ENCODE measurements at regions of chr14 and their contacts with region 1.

Region 1: DNA sequence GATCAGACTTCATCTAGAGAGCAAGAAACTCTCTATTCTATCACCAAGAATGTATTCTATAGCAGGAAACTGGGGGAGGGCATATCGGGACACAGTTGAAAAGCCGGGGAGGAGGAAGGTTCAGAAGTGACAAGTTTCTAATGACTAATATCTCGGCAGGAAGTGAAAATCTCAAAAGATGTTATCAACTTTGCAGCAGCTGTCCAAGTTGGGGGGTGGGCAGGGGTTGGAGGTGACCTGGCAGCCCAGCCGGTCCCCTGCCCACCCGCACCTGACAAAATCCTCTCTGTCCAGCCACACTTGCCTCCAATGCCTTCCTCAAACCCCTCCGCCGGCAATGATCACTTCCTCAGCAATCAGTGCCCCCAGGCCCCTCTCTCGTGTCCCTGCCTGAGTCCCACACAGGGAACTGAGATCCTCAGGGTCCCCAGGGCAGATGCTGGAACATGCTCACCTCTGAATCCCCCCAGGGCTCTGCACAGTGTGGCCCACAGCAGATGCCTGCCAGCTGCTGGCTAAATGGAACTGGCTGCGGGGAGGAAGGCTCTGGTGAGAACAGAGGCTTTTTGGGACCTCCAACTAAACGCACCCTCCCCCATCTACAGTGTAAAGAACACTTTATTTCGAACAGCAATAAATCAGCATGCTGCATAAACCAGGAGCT is 43.9 kb downstream of the CCDC88C start:
- DNase-seq: peak in 6 of 9 donors; percentile 42 to 61 (median 56)
- ATAC-seq: peak; percentile 59
- H3K4me3 ChIP-seq: peak overlapping the region; percentile 61
- H3K4me3 Mint-ChIP-seq: peak overlapping the region; percentile 79 to 89 (median 86)
- H3K27ac ChIP-seq: peak overlapping the region; percentile 72
- H3K27ac Mint-ChIP-seq: peak overlapping the region; percentile 89 to 99 (median 97)
- H3K4me1 ChIP-seq: peaks cover 94 to 98% of the 10 kb centered on the region in 2 donors
- H3K4me1 Mint-ChIP-seq: peaks cover 84 to 100% (median 98%) of the 10 kb centered on the region in 7 donors
- H3K27me3 ChIP-seq: no peaks in the 10 kb centered on the region
- H3K27me3 Mint-ChIP-seq: no peaks in the 10 kb centered on the region

Region 2: GRCh38 chr14:91388551-91388975 is 14.8 kb after region 1 on chr14:
- CTCF ChIA-PET with region 1: interaction called, 5 read pairs
- POLR2A ChIA-PET with region 1: interaction called, 22 read pairs
- intact Hi-C with region 1: loop called in 1 of 2 experiments (anchors 1 kb)
- DNase-seq: peak in 5 of 9 donors; percentile 29 to 64 (median 47)
- ATAC-seq: peak; percentile 74
- H3K4me3 ChIP-seq: peak overlapping the region; percentile 24
- H3K4me3 Mint-ChIP-seq: peak overlapping the region; percentile 56 to 92 (median 74)
- H3K27ac ChIP-seq: peak overlapping the region; percentile 60
- H3K27ac Mint-ChIP-seq: peak overlapping the region; percentile 12 to 93 (median 84)
- H3K4me1 ChIP-seq: peaks cover 90% of the 10 kb centered on the region in 2 donors
- H3K4me1 Mint-ChIP-seq: peaks cover 63 to 98% (median 88%) of the 10 kb centered on the region in 7 donors
- H3K27me3 ChIP-seq: no peaks in the 10 kb centered on the region
- H3K27me3 Mint-ChIP-seq: no peaks in the 10 kb centered on the region

Region 3: DNA sequence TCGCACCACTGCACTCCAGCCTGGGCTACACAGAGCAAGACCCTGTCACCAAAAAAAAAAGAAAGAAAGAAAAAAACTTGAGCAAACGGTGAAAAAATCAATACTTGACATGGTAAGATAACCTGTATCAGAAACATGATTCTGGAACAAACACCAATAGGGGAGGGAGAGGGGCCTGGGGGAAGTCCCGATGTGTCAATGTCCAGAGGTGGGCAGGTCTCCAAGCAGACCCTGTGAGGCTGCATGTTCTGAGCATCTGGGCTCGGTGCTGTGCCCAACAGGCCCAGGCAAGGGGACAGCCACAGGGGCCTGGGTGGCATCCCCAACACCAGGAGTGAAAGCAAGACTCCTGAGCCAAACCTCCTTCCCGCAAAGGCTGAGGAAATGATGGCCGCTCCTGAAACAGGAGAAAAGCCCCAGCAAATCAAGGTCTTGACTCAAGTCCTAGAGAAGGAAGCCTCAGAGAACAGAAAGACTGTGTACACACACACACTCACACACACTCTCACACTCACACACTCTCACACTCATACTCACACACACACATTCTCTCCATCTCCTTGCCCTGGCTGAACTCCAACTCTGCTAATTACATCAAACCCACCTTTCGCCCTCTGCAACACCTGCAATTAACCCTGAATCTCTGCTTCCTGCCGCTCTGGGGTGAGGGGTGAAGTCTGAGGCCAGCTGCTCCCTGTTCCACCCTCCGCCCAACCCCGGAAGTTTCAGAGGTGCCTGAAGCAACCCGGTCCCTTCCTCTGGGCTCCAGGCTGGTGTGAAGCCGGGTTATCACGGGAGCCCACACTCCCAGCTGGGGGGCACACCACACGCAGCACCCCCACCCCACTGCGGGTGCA is 23.5 kb after region 1 on chr14:
- CTCF ChIA-PET with region 1: interaction called, 14 read pairs
- POLR2A ChIA-PET with region 1: interaction called, 48 read pairs
- intact Hi-C with region 1: loop called (anchors 1 kb)
- DNase-seq: peak in 8 of 9 donors; percentile 61 to 77 (median 71)
- ATAC-seq: peak; percentile 68
- H3K4me3 ChIP-seq: peak overlapping the region; percentile 43
- H3K4me3 Mint-ChIP-seq: peak overlapping the region; percentile 73 to 99 (median 86)
- H3K27ac ChIP-seq: peak overlapping the region; percentile 76
- H3K27ac Mint-ChIP-seq: peak overlapping the region; percentile 77 to 99 (median 89)
- H3K4me1 ChIP-seq: peaks cover 88 to 90% of the 10 kb centered on the region in 2 donors
- H3K4me1 Mint-ChIP-seq: peaks cover 80 to 98% (median 91%) of the 10 kb centered on the region in 7 donors
- H3K27me3 ChIP-seq: no peaks in the 10 kb centered on the region
- H3K27me3 Mint-ChIP-seq: no peaks in the 10 kb centered on the region

Region 4: GRCh38 chr14:91402771-91403600 is 29.3 kb after region 1 on chr14:
- CTCF ChIA-PET with region 1: interaction called, 14 read pairs
- POLR2A ChIA-PET with region 1: interaction called, 48 read pairs
- intact Hi-C with region 1: loop called (anchors 1 kb)
- DNase-seq: no peak
- ATAC-seq: peak; percentile 2
- H3K4me3 ChIP-seq: peak overlapping the region; percentile 21
- H3K4me3 Mint-ChIP-seq: peak overlapping the region; percentile 64 to 92 (median 84)
- H3K27ac ChIP-seq: peak overlapping the region; percentile 95
- H3K27ac Mint-ChIP-seq: peak overlapping the region; percentile 71 to 99 (median 95)
- H3K4me1 ChIP-seq: peaks cover 86 to 90% of the 10 kb centered on the region in 2 donors
- H3K4me1 Mint-ChIP-seq: peaks cover 85 to 97% (median 90%) of the 10 kb centered on the region in 7 donors
- H3K27me3 ChIP-seq: no peaks in the 10 kb centered on the region
- H3K27me3 Mint-ChIP-seq: no peaks in the 10 kb centered on the region

Region 5: GRCh38 chr14:91793704-91794103 is 420.0 kb after region 1 on chr14:
- CTCF ChIA-PET with region 1: no interaction called
- POLR2A ChIA-PET with region 1: no interaction called
- intact Hi-C with region 1: no loop called
- DNase-seq: no peak
- ATAC-seq: no peak
- H3K4me3 ChIP-seq: no peak overlapping the region
- H3K4me3 Mint-ChIP-seq: no peak overlapping the region
- H3K27ac ChIP-seq: no peak overlapping the region
- H3K27ac Mint-ChIP-seq: peak overlapping the region in 7 of 9 donors; percentile 16 to 79 (median 46)
- H3K4me1 ChIP-seq: peaks cover 0 to 7% of the 10 kb centered on the region in 2 donors
- H3K4me1 Mint-ChIP-seq: peaks cover 2 to 37% (median 15%) of the 10 kb centered on the region in 7 donors
- H3K27me3 ChIP-seq: no peaks in the 10 kb centered on the region
- H3K27me3 Mint-ChIP-seq: no peaks in the 10 kb centered on the region